T-cell (primary cell): ENCODE measurements at regions of chr20 and their contacts with region 1.

Region 1: DNA sequence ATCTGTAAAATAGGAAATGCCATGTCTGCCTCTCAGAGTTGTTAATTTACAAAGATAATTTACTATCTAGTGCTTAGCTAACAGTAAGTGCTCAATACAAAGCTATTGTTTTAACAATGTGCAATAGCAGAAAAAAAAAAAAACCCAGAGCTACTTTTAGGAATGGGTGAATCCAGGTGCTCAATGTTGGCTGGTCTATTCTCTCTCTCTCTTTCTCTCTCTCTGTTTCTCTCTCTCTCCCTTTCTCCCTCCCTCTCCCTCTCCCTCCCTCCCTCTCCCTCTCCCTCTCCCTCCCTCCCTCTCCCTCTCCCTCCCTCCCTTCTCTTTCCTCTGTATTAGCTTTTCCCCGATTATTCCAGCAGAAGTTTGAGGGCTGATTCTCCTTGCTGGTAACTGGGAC is 14.0 kb downstream of the PDRG1 start:
- DNase-seq: no peak
- ATAC-seq: no peak
- H3K4me3 ChIP-seq: no peak overlapping the region
- H3K4me3 Mint-ChIP-seq: no peak overlapping the region
- H3K27ac ChIP-seq: no peak overlapping the region
- H3K27ac Mint-ChIP-seq: no peak overlapping the region
- H3K4me1 ChIP-seq: no peaks in the 10 kb centered on the region
- H3K4me1 Mint-ChIP-seq: no peaks in the 10 kb centered on the region
- H3K27me3 ChIP-seq: peaks cover 0 to 2% of the 10 kb centered on the region in 2 experiments
- H3K27me3 Mint-ChIP-seq: no peaks in the 10 kb centered on the region

Region 2: GRCh38 chr20:31630187-31630790 is 307.5 kb before region 1 on chr20:
- CTCF ChIA-PET with region 1: no interaction called
- POLR2A ChIA-PET with region 1: no interaction called
- DNase-seq: no peak
- ATAC-seq: no peak
- H3K4me3 ChIP-seq: no peak overlapping the region
- H3K4me3 Mint-ChIP-seq: no peak overlapping the region
- H3K27ac ChIP-seq: no peak overlapping the region
- H3K27ac Mint-ChIP-seq: no peak overlapping the region
- H3K4me1 ChIP-seq: peaks cover 0 to 4% of the 10 kb centered on the region in 2 experiments
- H3K4me1 Mint-ChIP-seq: no peaks in the 10 kb centered on the region
- H3K27me3 ChIP-seq: peaks cover 0 to 2% of the 10 kb centered on the region in 2 experiments
- H3K27me3 Mint-ChIP-seq: no peaks in the 10 kb centered on the region

Region 3: GRCh38 chr20:31674895-31675827 is 262.7 kb before region 1 on chr20:
- CTCF ChIA-PET with region 1: no interaction called
- POLR2A ChIA-PET with region 1: no interaction called
- DNase-seq: peak; percentile 24 to 84 (median 58)
- ATAC-seq: peak; percentile 67 to 80 (median 72)
- H3K4me3 ChIP-seq: peak overlapping the region; percentile 61 to 79
- H3K4me3 Mint-ChIP-seq: peak overlapping the region; percentile 96 to 99 (median 96)
- H3K27ac ChIP-seq: peak overlapping the region; percentile 89
- H3K27ac Mint-ChIP-seq: peak overlapping the region; percentile 96 to 99
- H3K4me1 ChIP-seq: peaks cover 43 to 86% of the 10 kb centered on the region in 2 experiments
- H3K4me1 Mint-ChIP-seq: peaks cover 67 to 77% (median 72%) of the 10 kb centered on the region in 3 donors
- H3K27me3 ChIP-seq: no peaks in the 10 kb centered on the region
- H3K27me3 Mint-ChIP-seq: no peaks in the 10 kb centered on the region

Region 4: DNA sequence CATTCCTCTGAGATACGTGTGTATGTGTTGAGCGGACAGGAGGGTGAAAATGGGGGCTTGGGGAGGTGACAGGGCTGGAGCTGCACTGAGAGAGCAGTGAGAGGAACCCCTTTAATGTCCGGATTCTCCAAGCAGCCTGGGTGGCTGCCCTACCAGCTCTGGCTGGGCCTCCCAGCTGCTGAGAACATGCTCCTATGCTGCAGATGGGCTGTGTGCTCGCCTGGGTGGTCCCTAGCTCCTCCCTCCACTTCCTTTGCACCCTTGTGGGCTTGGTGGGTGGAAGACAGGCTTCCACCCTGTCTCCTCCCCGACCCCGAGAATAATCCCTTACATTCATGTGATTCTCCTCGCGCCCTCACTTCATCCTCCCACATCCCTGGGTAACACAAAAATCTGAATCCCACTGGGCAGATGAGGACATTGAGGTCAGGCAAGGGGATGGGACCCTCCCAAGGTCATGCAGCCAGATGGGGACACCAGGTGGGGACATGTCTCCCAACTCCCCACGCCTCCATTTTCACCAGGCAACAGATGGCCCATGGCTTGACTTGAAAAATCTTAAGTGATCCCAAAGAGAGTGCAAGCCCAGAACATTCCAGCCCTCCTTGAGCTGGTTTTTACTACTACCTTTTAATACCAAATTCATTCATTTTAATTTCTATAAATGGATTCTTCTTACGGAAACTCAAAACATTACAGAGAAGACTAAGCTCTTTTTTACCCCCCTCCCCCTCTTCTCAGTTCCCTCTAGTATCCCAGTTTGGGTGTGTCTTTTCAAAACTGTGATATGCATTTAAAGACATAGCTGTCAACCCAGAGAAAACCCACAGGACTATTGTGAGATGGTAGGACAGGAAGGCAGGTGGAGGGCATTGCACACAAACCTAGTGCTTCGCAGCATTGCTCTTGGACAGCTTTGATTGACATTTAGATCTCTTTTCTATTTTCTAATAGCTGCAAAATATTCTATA is 19.0 kb after region 1 on chr20:
- CTCF ChIA-PET with region 1: interaction called in 1 of 2 experiments, 12 read pairs
- POLR2A ChIA-PET with region 1: no interaction called
- DNase-seq: no peak
- ATAC-seq: no peak
- H3K4me3 ChIP-seq: no peak overlapping the region
- H3K4me3 Mint-ChIP-seq: no peak overlapping the region
- H3K27ac ChIP-seq: no peak overlapping the region
- H3K27ac Mint-ChIP-seq: no peak overlapping the region
- H3K4me1 ChIP-seq: peaks cover 0 to 4% of the 10 kb centered on the region in 2 experiments
- H3K4me1 Mint-ChIP-seq: peaks cover 5% of the 10 kb centered on the region in 3 donors
- H3K27me3 ChIP-seq: peaks cover 0 to 40% of the 10 kb centered on the region in 2 experiments
- H3K27me3 Mint-ChIP-seq: peaks cover 24 to 50% of the 10 kb centered on the region in 2 donors